Dorsolateral prefrontal cortex (tissue), 120 donors: ENCODE measurements at regions of chr15 and their contacts with region 1.

Region 1: DNA sequence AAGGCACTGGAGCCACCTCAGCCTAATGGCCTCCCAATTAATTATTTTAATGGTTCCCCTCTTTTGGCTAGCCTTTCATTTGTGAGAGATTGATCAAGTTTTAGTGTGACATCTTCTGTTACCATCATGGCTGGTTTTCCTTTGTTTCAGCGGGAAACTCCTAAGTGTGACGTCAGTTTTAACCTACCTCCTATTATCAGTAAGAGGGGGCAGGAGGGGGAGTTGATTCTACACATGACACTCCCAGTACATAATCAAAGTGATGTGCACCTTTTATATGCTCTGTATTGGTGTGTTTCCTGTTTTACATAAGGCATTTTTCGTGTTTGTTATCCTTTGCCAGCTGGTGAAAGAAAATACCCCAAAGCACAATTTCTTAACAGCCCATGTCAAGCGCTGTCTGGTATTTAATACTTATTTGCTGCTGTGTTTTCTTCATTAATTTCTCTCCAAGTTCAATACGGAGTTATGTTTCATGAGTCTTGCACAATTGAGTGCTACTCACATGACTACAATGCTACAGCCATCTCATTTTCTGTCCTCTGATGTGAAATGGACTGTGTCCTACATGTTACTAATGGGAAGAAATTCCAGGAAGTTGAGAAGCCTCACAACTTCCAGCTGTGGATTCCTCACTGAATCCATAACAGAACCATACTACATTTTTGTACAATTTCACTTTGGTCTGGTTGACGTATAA is 52.2 kb upstream of the POLR2M start:
- DNase-seq: no peak
- H3K4me3 ChIP-seq: no peak overlapping the region
- H3K27ac ChIP-seq: no peak overlapping the region
- H3K27me3 ChIP-seq: no peaks in the 10 kb centered on the region
- CTCF ChIP-seq: no peak

Region 2: GRCh38 chr15:57541805-57542504 is 112.3 kb before region 1 on chr15:
- intact Hi-C with region 1: no loop called
- DNase-seq: peak; percentile 49 to 85 (median 74)
- H3K4me3 ChIP-seq: no peak overlapping the region
- H3K27ac ChIP-seq: peak overlapping the region in 1 of 59 donors; percentile 43
- H3K27me3 ChIP-seq: no peaks in the 10 kb centered on the region
- CTCF ChIP-seq: peak; percentile 56 to 88 (median 77)

Region 3: GRCh38 chr15:57703387-57703786 is 49.1 kb after region 1 on chr15:
- intact Hi-C with region 1: loop called in 1 of 2 experiments (anchors 5 kb)
- DNase-seq: no peak
- H3K4me3 ChIP-seq: no peak overlapping the region
- H3K27ac ChIP-seq: no peak overlapping the region
- H3K27me3 ChIP-seq: peaks cover 0 to 8% (median 0%) of the 10 kb centered on the region in 45 donors
- CTCF ChIP-seq: no peak

Region 4: DNA sequence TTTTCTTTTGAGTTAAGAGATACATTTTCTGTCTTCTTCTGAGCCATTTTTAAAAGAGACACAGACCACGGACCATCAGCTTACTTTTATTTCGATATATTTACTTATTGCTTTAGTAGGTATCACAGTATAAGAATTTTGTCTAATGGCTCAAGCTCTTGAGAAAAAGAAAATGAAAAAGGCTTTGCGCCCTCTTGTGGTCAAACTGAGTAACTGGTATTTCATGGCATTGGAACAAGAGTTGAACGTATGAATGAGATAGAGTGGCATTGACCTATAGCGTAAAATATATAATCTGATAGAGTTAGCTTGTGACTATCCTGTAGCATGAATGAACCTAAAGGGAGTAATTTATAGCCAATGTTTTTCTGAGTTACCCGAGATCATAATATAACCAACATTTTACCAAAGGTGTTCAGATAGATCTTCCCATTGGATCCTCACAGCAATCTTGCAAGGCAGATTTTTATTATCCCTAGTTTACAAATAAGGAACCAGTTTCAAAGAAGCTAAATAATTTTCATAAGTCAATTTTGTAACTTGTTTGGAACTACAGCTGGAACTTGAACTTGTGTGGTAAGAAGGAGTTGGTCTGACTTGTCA is 206.8 kb after region 1 on chr15:
- intact Hi-C with region 1: loop called in 1 of 2 experiments (anchors 2 kb)
- DNase-seq: peak in 1 of 10 donors; percentile 18
- H3K4me3 ChIP-seq: no peak overlapping the region
- H3K27ac ChIP-seq: no peak overlapping the region
- H3K27me3 ChIP-seq: peaks cover 0 to 3% (median 0%) of the 10 kb centered on the region in 45 donors
- CTCF ChIP-seq: peak; percentile 82 to 98 (median 92)